ENCODE measurements at regions of chr1 and their contacts with region 1.

Region 1: GRCh38 chr1:205255941-205256780 is 28.4 kb downstream of the TMCC2 start:
- DNase-seq: peak; percentile 82
- ATAC-seq: peak; percentile 91 to 97
- H3K4me3 ChIP-seq: no peak overlapping the region
- H3K27ac ChIP-seq: peak overlapping the region in 1 of 2 experiments; percentile 51; a peak in 3 of 6 replicates
- H3K4me1 ChIP-seq: peaks cover 16% of the 10 kb centered on the region
- CTCF ChIP-seq: peak; percentile 95
- EP300 ChIP-seq: no peak
- POLR2A ChIP-seq: no peak
- RAD21 ChIP-seq: peak; percentile 97 to 100

Region 2: DNA sequence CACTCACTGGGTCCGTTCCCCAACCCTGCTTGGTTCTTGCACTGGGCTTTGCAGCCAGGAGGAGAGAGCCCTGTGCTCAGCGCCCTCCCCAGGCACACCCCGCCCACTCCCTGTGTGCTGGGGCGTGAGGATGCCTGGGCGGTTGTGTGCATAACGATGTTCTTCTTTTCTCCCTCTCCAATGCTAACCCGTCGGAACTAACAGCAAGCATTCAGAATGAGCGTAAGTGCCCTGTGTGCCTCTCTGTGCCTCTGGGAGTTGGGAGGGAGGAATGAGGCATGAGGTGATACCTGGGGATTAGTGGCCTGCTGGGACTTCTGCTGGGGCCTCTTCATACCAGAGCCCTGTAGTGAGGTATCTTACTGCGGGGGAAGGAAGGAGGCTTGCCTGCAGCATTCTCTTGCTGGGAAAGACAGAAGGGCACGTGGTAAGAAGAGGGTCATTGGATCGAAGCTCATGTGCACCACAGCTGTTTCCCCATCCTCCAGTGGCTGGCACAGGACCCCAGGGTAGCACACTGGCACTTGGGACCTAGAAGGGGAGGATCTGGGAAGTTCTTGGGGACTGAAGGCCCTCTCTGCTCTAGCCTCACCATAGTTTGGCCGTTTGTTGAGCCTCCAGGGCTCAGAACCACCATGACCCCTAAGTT is 305.7 kb before region 1 on chr1:
- CTCF ChIA-PET with region 1: interaction called, 10 read pairs
- POLR2A ChIA-PET with region 1: no interaction called
- DNase-seq: no peak
- ATAC-seq: no peak
- H3K4me3 ChIP-seq: no peak overlapping the region
- H3K27ac ChIP-seq: no peak overlapping the region
- H3K4me1 ChIP-seq: no peaks in the 10 kb centered on the region
- CTCF ChIP-seq: no peak
- EP300 ChIP-seq: no peak
- POLR2A ChIP-seq: no peak
- RAD21 ChIP-seq: no peak

Region 3: GRCh38 chr1:204980840-204981405 is 275.2 kb before region 1 on chr1:
- CTCF ChIA-PET with region 1: interaction called, 86 read pairs
- POLR2A ChIA-PET with region 1: no interaction called
- DNase-seq: no peak
- ATAC-seq: no peak
- H3K4me3 ChIP-seq: no peak overlapping the region
- H3K27ac ChIP-seq: no peak overlapping the region
- H3K4me1 ChIP-seq: no peaks in the 10 kb centered on the region
- CTCF ChIP-seq: no peak
- EP300 ChIP-seq: no peak
- POLR2A ChIP-seq: no peak
- RAD21 ChIP-seq: no peak

Region 4: DNA sequence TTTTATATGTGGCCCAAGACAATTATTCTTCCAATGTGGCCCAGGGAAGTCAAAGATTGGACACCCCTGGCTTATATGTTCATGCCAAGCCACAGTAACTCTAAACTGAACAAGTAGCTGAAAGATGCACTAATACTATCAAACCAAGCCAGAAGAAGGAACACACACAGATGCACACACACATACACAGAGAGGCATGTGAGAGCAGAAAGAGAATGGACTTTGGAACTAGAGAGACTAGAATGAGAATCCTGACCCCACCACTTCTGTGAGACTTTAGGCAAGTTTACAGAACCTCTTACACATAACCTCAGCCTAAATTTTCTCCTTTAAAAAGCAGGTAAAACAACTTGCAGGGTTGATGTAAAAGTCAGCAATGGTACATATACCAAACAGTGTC is 160.7 kb before region 1 on chr1:
- CTCF ChIA-PET with region 1: interaction called, 13 read pairs
- POLR2A ChIA-PET with region 1: no interaction called
- DNase-seq: no peak
- ATAC-seq: no peak
- H3K4me3 ChIP-seq: no peak overlapping the region
- H3K27ac ChIP-seq: no peak overlapping the region
- H3K4me1 ChIP-seq: no peaks in the 10 kb centered on the region
- CTCF ChIP-seq: no peak
- EP300 ChIP-seq: no peak
- POLR2A ChIP-seq: no peak
- RAD21 ChIP-seq: no peak

Region 5: GRCh38 chr1:205141236-205142101 is 114.7 kb before region 1 on chr1:
- CTCF ChIA-PET with region 1: interaction called, 25 read pairs
- POLR2A ChIA-PET with region 1: no interaction called
- DNase-seq: peak; percentile 76 to 83
- ATAC-seq: peak; percentile 88 to 94
- H3K4me3 ChIP-seq: no peak overlapping the region
- H3K27ac ChIP-seq: peak overlapping the region in 1 of 2 experiments; percentile 63; a peak in 2 of 6 replicates
- H3K4me1 ChIP-seq: peaks cover 16% of the 10 kb centered on the region
- CTCF ChIP-seq: peak; percentile 82
- EP300 ChIP-seq: no peak
- POLR2A ChIP-seq: no peak
- RAD21 ChIP-seq: peak; percentile 52 to 59; a peak in 4 of 5 replicates

Measured in A549 (cell line).